ENCODE measurements at regions of chr20 and their contacts with region 1.

Region 1: DNA sequence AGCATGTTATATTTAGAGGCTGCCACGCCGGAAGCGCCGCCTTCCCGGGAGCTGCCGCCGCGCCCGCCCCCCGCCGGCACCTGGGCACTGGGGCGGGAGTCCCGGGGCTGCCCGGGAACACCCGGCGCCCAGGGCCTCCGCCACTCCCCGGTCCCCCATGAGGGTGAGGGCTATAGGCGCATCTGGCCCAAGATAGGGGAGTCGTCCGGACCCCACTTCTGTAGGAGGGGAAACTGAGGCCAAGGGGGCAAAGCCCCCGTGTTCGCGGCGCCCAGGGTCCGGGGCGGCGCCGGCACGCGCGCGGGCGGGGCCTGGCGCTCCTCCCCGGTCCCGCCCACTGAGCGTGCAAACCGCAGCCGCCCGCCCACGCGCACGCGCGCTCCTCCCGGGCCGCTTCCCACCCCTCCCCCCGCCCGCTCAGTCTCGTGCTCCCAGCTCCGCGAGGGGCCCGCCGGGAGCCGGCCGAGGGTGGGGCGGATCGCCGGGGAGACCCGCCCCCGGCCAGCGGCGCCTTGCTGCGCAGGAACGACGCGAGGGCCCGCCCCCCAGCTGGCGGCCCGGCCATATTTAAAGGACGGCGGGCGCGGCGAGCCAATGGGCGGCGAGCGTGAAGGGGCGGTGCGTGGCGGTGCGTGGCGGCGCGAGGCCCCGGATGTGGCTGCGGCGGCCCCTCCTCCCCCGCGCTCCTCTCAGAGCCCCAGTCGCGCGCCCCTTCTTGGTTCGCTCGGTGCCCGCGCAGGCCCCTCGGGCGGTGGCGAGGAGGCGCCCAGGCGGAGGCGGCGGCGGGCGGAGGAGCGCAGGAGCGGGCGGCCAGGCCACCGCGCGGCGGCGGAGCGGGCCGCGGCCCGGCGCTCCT is at the start of gene LSM14B:
- DNase-seq: peak; percentile 97
- H3K4me3 Mint-ChIP-seq: peak within 1 kb of the TSS; percentile 84
- H3K27ac Mint-ChIP-seq: peak within 1 kb of the TSS; percentile 86
- H3K4me1 Mint-ChIP-seq: peaks cover 42% of the 10 kb centered on the region
- H3K27me3 Mint-ChIP-seq: no peaks in the 10 kb centered on the region
- total RNA-seq, gene LSM14B: 38.9 to 39.0 TPM

Region 2: GRCh38 chr20:62010551-62011402 is 111.2 kb before region 1 on chr20:
- CTCF ChIA-PET with region 1: interaction called, 10 read pairs
- POLR2A ChIA-PET with region 1: no interaction called
- DNase-seq: peak; percentile 55
- H3K4me3 Mint-ChIP-seq: no peak overlapping the region
- H3K27ac Mint-ChIP-seq: no peak overlapping the region
- H3K4me1 Mint-ChIP-seq: peaks cover 4% of the 10 kb centered on the region
- H3K27me3 Mint-ChIP-seq: no peaks in the 10 kb centered on the region

Region 3: GRCh38 chr20:62104791-62105345 is 17.1 kb before region 1 on chr20:
- CTCF ChIA-PET with region 1: no interaction called
- POLR2A ChIA-PET with region 1: no interaction called
- DNase-seq: no peak
- H3K4me3 Mint-ChIP-seq: no peak overlapping the region
- H3K27ac Mint-ChIP-seq: no peak overlapping the region
- H3K4me1 Mint-ChIP-seq: no peaks in the 10 kb centered on the region
- H3K27me3 Mint-ChIP-seq: no peaks in the 10 kb centered on the region

Region 4: DNA sequence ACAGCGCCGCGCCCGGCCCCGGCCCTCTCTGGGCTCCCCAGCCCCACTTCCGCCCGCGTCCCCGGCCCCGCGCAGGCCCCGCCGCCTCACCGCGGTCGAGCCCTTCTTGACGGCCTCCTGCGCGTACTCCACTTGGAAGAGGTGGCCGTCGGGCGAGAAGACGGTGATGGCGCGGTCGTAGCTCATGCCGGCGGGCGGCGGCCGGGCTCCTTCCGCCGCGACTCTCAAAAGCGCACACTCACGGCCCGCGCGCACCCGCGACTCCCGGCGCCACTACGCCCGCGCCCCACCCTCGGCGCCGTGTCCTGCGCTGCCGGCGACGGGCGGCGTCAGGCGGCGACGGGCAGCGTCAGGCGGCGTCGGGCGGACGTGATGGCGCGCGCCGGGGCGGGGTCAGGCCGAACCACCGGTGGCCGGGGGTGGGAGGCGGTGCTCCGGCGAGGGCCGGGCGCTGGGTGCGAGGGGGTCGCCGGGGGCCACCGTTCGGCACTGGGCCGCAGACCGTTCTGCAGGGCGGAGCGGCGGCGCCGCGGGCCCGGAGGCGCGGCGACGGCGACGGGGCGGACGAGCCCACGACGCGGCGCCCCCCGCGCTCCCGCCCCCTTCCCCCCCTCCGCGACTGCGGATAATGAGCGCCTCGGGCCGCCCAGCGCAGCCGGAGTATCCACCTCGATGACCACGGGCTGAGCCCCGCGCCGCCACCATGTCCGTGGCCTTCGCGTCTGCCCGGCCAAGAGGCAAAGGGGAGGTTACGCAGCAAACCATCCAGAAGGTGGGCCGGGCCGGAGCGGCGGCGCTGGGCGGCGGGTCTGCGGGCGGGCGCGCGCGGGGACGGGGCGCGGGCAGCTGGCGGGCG is 21.3 kb after region 1 on chr20 and contains the starts of genes PSMA7 and SS18L1:
- CTCF ChIA-PET with region 1: interaction called, 14 read pairs
- POLR2A ChIA-PET with region 1: interaction called, 60 read pairs
- DNase-seq: peak; percentile 87
- H3K4me3 Mint-ChIP-seq: peak within 1 kb of the TSS; percentile 89
- H3K27ac Mint-ChIP-seq: peak within 1 kb of the TSS; percentile 90
- H3K4me1 Mint-ChIP-seq: peaks cover 50% of the 10 kb centered on the region
- H3K27me3 Mint-ChIP-seq: no peaks in the 10 kb centered on the region
- total RNA-seq, gene PSMA7: 243 to 246 TPM
- total RNA-seq, gene SS18L1: 15.1 to 16.7 TPM